CD8-positive, alpha-beta T cell (primary cell): ENCODE measurements at regions of chr13 and their contacts with region 1.

Region 1: DNA sequence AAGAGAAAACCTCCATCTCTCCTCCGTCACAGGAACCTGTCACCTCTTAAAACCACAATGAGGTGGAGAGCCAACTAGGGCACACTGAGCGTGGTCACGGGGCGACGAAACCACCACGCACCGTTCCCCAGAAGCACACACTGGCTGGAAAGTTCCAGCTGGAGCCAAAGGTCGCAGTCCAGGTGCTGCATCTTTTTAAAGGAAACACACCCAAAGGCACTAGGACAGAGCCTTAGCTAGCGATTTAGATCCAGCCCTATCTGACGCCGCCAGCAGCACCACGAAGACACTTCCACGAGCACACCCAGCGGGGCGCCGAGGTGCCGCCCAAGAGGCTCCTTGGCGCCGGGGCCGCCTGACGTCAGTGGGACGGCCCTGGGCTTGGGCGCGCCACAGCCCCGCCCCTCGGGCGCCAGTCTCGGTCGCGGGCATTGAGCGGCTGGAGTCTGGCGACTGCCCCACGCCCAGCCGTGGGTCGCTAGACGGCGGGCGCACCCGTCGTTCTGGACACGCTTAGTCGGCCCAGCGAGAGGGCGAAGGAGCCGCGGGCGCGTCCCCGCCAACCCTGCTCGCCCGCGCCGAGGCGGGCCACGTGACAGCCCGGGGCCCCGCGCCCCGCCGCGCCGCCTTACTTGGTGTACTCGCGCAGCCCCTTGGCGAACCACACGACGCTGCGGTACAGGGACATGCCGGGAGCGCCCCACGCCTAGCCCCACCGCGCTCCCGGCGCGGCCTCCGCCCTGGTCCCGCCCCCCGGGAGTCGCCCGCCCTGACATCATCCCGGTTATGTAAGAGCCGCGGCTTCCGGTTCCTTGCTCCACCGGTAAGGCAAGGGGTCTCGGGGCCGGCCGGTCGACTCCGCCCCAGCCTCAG is at the start of gene DHRS12:
- DNase-seq: peak; percentile 75 to 97 (median 88)
- ATAC-seq: peak; percentile 71
- H3K4me3 ChIP-seq: peak within 1 kb of the TSS; percentile 77 to 79
- H3K4me3 Mint-ChIP-seq: peak within 1 kb of the TSS; percentile 92
- H3K27ac ChIP-seq: peak within 1 kb of the TSS; percentile 97 to 99
- H3K27ac Mint-ChIP-seq: peak within 1 kb of the TSS; percentile 100
- H3K4me1 ChIP-seq: peaks cover 39% of the 10 kb centered on the region
- H3K4me1 Mint-ChIP-seq: peaks cover 55% of the 10 kb centered on the region
- H3K27me3 ChIP-seq: no peaks in the 10 kb centered on the region
- H3K27me3 Mint-ChIP-seq: no peaks in the 10 kb centered on the region
- CTCF ChIP-seq: no peak
- total RNA-seq, gene DHRS12: 13.4 to 14.1 TPM

Region 2: GRCh38 chr13:51583875-51584730 is 219.6 kb before region 1 on chr13 and contains the start of gene WDFY2:
- CTCF ChIA-PET with region 1: no interaction called
- POLR2A ChIA-PET with region 1: interaction called, 4 read pairs
- intact Hi-C with region 1: loop called (anchors 1 kb)
- DNase-seq: peak; percentile 98 to 100 (median 99)
- ATAC-seq: peak; percentile 82
- H3K4me3 ChIP-seq: peak within 1 kb of the TSS; percentile 71 to 81
- H3K4me3 Mint-ChIP-seq: peak within 1 kb of the TSS; percentile 99
- H3K27ac ChIP-seq: peak within 1 kb of the TSS; percentile 83 to 89
- H3K27ac Mint-ChIP-seq: peak within 1 kb of the TSS; percentile 100
- H3K4me1 ChIP-seq: peaks cover 11% of the 10 kb centered on the region
- H3K4me1 Mint-ChIP-seq: peaks cover 35% of the 10 kb centered on the region
- H3K27me3 ChIP-seq: no peaks in the 10 kb centered on the region
- H3K27me3 Mint-ChIP-seq: no peaks in the 10 kb centered on the region
- CTCF ChIP-seq: no peak
- total RNA-seq, gene WDFY2: 17.2 to 18.6 TPM

Region 3: DNA sequence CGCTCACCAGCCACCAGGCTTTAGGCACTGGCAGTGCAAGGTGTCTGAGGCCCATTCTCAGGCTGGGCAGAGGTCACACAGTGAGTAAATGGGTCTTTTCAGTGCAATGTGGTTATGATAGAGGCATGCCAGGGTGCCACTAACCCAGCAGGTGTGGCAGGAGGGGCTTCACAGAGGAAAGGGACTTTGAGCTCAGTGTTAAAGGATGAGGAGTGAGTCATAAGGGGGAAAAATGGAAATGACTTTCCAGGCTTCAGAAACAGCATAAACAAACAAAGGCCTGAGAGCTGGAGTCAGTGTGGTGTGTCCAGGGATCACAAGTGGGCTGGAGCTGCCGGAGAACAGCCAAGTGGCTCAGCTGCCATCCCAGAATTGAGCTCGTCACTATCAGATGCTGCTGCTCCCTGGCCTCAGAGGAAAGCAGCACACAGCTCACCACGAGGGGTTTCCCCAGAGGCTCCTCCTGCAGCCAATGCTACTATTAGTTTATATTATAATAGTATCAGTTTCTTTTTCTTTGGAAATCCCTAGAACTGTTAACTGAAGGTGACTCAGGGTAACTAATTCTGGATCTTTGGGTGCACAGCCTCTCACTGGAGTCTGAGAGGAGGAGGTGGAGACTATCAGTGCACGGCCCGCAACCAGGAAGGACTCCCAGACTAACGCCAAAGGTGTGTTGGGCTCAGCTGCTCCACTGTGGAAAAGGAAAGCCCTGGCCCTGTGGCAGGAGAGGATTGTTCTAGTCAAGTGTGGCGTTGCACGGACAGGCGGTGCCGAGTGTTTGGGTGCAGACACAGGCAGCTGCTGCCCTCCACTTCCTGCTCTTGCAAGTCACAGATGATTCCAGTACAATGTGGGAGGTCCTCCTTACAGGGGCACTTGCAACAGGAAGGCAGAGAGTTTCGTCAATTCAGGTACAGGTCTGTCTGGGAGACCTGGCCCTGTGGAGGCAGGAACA is 39.2 kb before region 1 on chr13:
- CTCF ChIA-PET with region 1: no interaction called
- POLR2A ChIA-PET with region 1: interaction called, 4 read pairs
- intact Hi-C with region 1: loop called in 1 of 2 experiments (anchors 2 kb)
- DNase-seq: peak in 8 of 9 experiments; percentile 12 to 84 (median 48)
- ATAC-seq: peak; percentile 84
- H3K4me3 ChIP-seq: peak overlapping the region; percentile 19 to 51
- H3K4me3 Mint-ChIP-seq: peak overlapping the region; percentile 80
- H3K27ac ChIP-seq: peak overlapping the region; percentile 36 to 70
- H3K27ac Mint-ChIP-seq: peak overlapping the region; percentile 87
- H3K4me1 ChIP-seq: peaks cover 15% of the 10 kb centered on the region
- H3K4me1 Mint-ChIP-seq: peaks cover 26% of the 10 kb centered on the region
- H3K27me3 ChIP-seq: no peaks in the 10 kb centered on the region
- H3K27me3 Mint-ChIP-seq: no peaks in the 10 kb centered on the region
- CTCF ChIP-seq: no peak

Region 4: DNA sequence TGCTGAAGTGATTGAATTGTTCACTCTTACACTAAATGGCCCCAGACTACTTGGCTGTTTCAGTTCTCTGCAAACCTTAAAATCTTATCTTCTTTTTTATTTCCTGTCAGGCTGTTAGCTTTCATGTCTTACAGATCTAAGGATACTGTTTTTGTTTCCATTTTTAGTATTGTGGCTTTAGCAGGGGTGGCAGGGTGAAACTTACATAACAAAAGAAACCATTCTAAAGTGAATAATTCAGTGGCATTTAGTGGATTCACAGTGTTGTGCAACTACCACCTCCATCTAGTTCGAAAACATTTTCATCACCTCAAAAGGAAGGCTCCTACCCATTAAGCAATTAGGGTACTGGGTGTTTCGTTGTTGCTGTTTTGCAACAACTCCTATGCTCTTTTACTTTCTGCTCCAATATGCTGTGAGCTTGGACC is 21.5 kb after region 1 on chr13:
- CTCF ChIA-PET with region 1: interaction called, 7 read pairs
- POLR2A ChIA-PET with region 1: interaction called, 143 read pairs
- intact Hi-C with region 1: loop called in 1 of 2 experiments (anchors 1 kb)
- DNase-seq: peak in 2 of 9 experiments; percentile 60 to 77
- ATAC-seq: peak; percentile 60
- H3K4me3 ChIP-seq: peak overlapping the region; percentile 55 to 59
- H3K4me3 Mint-ChIP-seq: peak overlapping the region; percentile 91
- H3K27ac ChIP-seq: peak overlapping the region; percentile 64 to 74
- H3K27ac Mint-ChIP-seq: peak overlapping the region; percentile 97
- H3K4me1 ChIP-seq: peaks cover 80% of the 10 kb centered on the region
- H3K4me1 Mint-ChIP-seq: peaks cover 91% of the 10 kb centered on the region
- H3K27me3 ChIP-seq: no peaks in the 10 kb centered on the region
- H3K27me3 Mint-ChIP-seq: no peaks in the 10 kb centered on the region
- CTCF ChIP-seq: no peak

Region 5: GRCh38 chr13:52194184-52194868 is 390.7 kb after region 1 on chr13:
- CTCF ChIA-PET with region 1: no interaction called
- POLR2A ChIA-PET with region 1: interaction called, 3 read pairs
- intact Hi-C with region 1: loop called in 1 of 2 experiments (anchors 2 kb)
- DNase-seq: peak; percentile 81 to 95 (median 86)
- ATAC-seq: peak; percentile 85
- H3K4me3 ChIP-seq: peak overlapping the region; percentile 76 to 87
- H3K4me3 Mint-ChIP-seq: peak overlapping the region; percentile 98
- H3K27ac ChIP-seq: peak overlapping the region; percentile 64 to 65
- H3K27ac Mint-ChIP-seq: peak overlapping the region; percentile 98
- H3K4me1 ChIP-seq: peaks cover 16% of the 10 kb centered on the region
- H3K4me1 Mint-ChIP-seq: peaks cover 39% of the 10 kb centered on the region
- H3K27me3 ChIP-seq: no peaks in the 10 kb centered on the region
- H3K27me3 Mint-ChIP-seq: no peaks in the 10 kb centered on the region
- CTCF ChIP-seq: no peak